Lower leg skin (tissue), 4 donors: ENCODE measurements at regions of chr10 and their contacts with region 1.

Region 1: DNA sequence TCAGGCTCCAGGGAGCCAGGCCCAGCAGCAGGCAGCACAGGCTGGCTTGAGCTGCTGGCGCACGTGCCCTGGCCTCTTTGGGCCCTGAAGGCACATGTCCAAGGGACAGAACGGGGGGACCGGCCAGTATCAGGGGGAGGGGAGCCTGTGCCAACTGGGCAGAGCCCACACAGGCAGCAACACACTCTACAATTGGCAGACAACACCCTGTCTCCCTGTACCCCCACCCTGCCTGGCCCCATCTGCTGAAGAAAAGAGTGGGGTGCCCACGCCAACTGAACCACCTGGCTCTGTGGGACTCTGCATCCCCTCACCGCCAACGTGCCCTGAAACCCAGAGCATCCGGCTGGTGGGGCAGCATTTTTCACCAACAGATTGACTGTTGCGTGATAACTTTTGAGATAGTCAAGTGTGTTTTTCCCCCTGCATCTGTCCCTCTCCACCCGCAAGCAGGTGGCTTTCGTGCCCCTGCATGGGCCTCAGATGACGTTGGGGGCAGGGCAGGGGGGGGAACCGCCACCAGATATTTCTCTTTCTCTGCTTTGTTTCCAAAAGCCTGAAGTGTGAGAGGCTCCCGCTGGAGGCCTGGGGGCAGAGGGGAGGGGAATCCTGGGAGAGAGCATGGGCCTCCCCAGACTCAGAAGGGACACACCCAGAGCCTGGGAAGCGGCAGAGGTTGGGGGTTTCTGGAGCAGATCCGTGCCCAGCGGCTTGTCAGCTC is 21.8 kb downstream of the SLIT1 start:
- DNase-seq: no peak
- H3K4me3 ChIP-seq: no peak overlapping the region
- CTCF ChIP-seq: no peak
- POLR2A ChIP-seq: no peak

Region 2: GRCh38 chr10:95588025-95588424 is 1575.9 kb before region 1 on chr10:
- intact Hi-C with region 1: no loop called
- DNase-seq: peak in 1 of 2 donors; percentile 40
- H3K4me3 ChIP-seq: no peak overlapping the region
- CTCF ChIP-seq: no peak
- POLR2A ChIP-seq: no peak

Region 3: GRCh38 chr10:96930469-96930868 is 233.5 kb before region 1 on chr10:
- intact Hi-C with region 1: no loop called
- DNase-seq: no peak
- H3K4me3 ChIP-seq: no peak overlapping the region
- CTCF ChIP-seq: no peak
- POLR2A ChIP-seq: no peak

Region 4: DNA sequence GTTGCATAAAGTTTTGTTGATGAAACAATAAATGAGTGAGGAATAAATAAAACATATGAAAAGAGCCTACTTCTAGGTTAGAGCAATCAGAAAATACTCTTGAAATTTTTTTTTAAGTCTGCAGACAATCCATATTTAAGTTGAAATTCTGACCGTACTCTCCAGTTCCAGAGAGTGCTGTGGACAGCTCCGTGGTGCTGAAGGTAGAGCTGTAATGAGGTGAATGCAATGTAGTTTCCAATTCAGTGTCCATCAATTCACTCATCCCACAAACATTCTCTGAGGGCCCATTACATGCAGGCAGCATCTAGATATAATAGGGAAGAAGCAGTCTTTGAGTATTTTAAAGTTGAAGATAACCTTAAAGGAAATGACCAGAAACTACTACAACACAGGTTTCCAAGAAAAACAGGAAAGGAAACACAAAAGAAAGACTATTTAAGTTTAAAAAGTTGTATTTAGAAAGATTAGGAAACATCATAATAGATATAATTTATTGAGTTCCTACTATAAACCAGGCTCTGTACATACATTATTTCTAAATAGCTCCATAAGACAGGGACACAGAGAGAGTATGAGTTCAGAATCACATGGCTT is 910.5 kb after region 1 on chr10:
- intact Hi-C with region 1: loop called (anchors 10 kb)
- DNase-seq: no peak
- H3K4me3 ChIP-seq: no peak overlapping the region
- CTCF ChIP-seq: no peak
- POLR2A ChIP-seq: no peak